ENCODE measurements at regions of chr14 and their contacts with region 1.

Region 1: GRCh38 chr14:68816262-68816942 is 23.5 kb upstream of the ZFP36L1 start:
- DNase-seq: peak; percentile 95
- H3K4me3 ChIP-seq: peak overlapping the region; percentile 61
- H3K27ac ChIP-seq: peak overlapping the region; percentile 92
- H3K4me1 ChIP-seq: peaks cover 82% of the 10 kb centered on the region
- CTCF ChIP-seq: peak; percentile 90

Region 2: DNA sequence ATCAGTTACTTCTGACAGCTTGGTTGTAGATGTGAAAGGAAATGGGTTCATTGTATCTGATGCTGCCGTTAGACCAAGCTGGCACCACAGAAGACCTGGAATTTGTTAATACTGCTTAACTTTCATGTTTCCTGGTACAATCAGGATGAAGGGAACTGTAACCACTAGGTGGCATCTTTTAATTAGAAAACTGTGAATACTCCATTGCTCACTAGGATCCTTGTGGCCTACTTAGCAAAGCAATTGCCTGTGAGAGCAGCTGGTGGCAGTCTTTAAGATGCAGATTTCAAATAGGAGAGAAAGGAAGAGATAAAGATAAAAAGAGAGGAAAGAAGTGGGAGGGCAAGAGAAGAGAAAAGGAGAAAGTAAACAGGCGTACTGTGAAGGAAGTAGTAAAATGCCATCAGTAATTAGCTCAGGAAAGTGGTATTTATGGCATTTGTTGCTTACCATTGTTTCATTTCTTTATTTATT is 882.4 kb before region 1 on chr14:
- CTCF ChIA-PET with region 1: no interaction called
- POLR2A ChIA-PET with region 1: no interaction called
- intact Hi-C with region 1: loop called (anchors 1 kb)
- DNase-seq: peak; percentile 73
- H3K4me3 ChIP-seq: no peak overlapping the region
- H3K27ac ChIP-seq: no peak overlapping the region
- H3K4me1 ChIP-seq: no peaks in the 10 kb centered on the region
- CTCF ChIP-seq: peak; percentile 90

Region 3: DNA sequence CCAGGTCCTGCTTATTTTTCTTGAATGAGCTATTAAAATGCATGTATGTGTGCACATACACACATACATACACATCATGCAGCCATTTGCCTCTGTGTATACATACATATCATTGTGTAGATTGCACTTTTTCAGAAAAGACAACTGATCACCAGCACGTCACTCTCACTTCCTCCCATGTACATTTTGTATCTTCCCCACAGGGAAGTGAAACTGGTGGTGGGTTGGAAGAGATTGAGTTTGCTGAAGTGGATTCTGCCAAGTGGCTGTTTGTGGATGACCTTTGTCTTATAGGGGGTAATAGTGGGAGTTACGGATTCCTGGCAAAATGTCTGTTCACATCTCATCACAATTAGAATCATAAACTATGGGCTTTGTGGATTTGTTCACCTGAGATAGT is 548.2 kb before region 1 on chr14:
- CTCF ChIA-PET with region 1: no interaction called
- POLR2A ChIA-PET with region 1: interaction called, 3 read pairs
- intact Hi-C with region 1: loop called (anchors 5 kb)
- DNase-seq: peak; percentile 93
- H3K4me3 ChIP-seq: peak overlapping the region; percentile 42
- H3K27ac ChIP-seq: peak overlapping the region; percentile 93
- H3K4me1 ChIP-seq: peaks cover 91% of the 10 kb centered on the region
- CTCF ChIP-seq: no peak

Region 4: GRCh38 chr14:68369281-68370056 is 446.9 kb before region 1 on chr14:
- CTCF ChIA-PET with region 1: no interaction called
- POLR2A ChIA-PET with region 1: interaction called, 5 read pairs
- intact Hi-C with region 1: loop called (anchors 2 kb)
- DNase-seq: no peak
- H3K4me3 ChIP-seq: peak overlapping the region; percentile 13
- H3K27ac ChIP-seq: peak overlapping the region; percentile 34
- H3K4me1 ChIP-seq: peaks cover 98% of the 10 kb centered on the region
- CTCF ChIP-seq: no peak

Region 5: DNA sequence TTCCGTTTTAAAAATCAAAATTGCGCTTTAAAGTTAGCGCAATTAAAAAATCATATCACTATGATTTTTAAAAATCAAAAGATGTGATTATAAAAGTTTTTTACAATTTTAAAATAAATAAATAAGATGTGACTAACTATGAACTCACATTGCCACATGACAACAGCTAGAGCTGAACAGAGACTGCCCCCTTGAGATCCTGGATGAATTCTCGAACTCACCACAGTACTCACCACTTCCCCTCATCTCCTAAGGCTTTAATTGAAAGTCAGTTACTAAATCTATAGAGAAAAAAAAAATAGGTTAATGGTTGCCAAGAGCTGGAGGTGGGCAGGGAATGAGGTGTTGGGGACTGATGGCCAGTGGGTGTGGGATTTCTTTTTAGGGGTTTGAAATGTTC is 407.7 kb before region 1 on chr14:
- CTCF ChIA-PET with region 1: no interaction called
- POLR2A ChIA-PET with region 1: no interaction called
- intact Hi-C with region 1: no loop called
- DNase-seq: peak; percentile 53
- H3K4me3 ChIP-seq: no peak overlapping the region
- H3K27ac ChIP-seq: no peak overlapping the region
- H3K4me1 ChIP-seq: peaks cover 34% of the 10 kb centered on the region
- CTCF ChIP-seq: peak; percentile 76

Region 6: DNA sequence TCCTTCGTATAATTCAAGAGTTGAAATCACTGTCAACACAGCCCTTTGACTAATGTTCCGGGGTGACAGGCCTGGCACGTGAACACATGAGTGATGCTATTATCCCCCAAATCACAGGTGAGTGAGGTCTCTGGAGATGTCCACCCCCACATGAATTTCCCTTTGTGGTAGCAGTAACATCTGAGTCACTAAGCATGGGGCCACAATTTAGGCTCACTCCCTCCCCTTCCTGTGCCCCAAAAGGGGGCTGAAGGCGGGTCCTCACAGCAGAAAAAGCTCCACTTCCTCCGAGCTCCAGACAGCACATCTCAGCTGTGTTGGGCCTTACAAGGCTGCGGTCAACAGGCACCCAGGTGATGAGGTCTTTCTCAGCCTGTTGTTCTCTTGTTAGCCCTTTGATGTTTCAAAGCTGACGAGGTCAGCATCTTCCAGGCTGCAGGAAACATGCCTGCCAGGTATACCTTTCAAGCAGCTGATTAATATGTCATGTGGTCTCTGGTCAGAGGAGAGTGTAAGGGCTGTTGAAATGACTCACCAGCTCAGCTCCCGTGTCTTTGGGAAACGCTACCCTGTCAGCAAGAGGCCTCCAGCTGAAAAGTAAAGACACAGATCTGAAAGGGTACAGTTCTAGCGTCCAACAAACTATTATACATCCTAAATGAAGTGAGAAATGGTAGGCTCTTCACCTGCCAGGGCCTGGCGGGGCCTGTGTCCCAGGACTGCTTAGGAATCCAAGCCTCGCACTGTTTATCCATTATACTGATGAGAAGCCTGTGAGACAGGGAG is 130.8 kb before region 1 on chr14:
- CTCF ChIA-PET with region 1: no interaction called
- POLR2A ChIA-PET with region 1: interaction called, 12 read pairs
- intact Hi-C with region 1: loop called (anchors 1 kb)
- DNase-seq: peak; percentile 98
- H3K4me3 ChIP-seq: peak overlapping the region; percentile 57
- H3K27ac ChIP-seq: peak overlapping the region; percentile 97
- H3K4me1 ChIP-seq: peaks cover 98% of the 10 kb centered on the region
- CTCF ChIP-seq: no peak

Region 7: GRCh38 chr14:68762953-68763764 is 53.2 kb before region 1 on chr14:
- CTCF ChIA-PET with region 1: no interaction called
- POLR2A ChIA-PET with region 1: no interaction called
- intact Hi-C with region 1: no loop called
- DNase-seq: no peak
- H3K4me3 ChIP-seq: no peak overlapping the region
- H3K27ac ChIP-seq: no peak overlapping the region
- H3K4me1 ChIP-seq: no peaks in the 10 kb centered on the region
- CTCF ChIP-seq: no peak

Region 8: GRCh38 chr14:68795597-68796417 is 20.6 kb before region 1 on chr14:
- CTCF ChIA-PET with region 1: interaction called, 24 read pairs
- POLR2A ChIA-PET with region 1: interaction called, 126 read pairs
- intact Hi-C with region 1: loop called (anchors 1 kb)
- DNase-seq: peak; percentile 90
- H3K4me3 ChIP-seq: peak overlapping the region; percentile 87
- H3K27ac ChIP-seq: peak overlapping the region; percentile 92
- H3K4me1 ChIP-seq: peaks cover 39% of the 10 kb centered on the region
- CTCF ChIP-seq: peak; percentile 71

Region 9: DNA sequence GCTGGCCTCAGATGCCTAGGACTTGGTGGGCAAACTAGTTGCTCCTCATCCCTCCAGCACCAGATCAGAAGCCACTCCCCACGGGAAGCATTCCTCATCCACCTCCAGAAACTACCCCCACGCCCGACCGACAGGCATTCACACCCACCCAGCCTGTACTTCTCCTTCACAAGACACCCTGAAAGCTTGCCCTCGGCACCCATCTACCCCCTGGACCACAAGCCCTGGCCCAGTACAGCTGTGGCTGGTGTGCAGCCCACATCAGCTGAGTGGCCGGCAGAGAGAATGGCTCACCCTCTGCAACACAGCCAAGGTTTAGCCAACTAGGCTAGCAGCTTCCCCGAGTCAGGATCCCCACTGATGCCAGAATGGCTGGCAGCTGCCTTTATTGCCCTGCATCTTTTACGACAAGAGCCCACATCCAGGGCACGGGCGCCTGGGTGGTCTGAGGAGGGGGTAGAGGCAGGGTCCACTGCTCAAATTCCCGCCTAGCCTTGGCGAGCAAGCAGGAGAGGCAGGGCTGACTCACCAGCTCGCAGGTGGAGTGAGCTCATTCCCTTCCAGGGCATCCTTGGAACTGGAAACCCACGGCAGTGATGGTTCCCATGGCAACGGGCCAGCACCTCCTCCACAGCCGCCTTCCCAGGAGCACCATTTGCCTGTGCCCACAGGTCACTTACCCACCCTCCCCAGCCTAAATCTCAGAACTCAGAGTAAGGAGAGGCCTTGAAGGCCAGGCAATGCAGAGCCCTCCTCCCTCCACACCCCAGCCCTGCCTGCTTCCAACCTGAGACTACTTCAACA is 145.6 kb after region 1 on chr14:
- CTCF ChIA-PET with region 1: no interaction called
- POLR2A ChIA-PET with region 1: no interaction called
- intact Hi-C with region 1: no loop called
- DNase-seq: no peak
- H3K4me3 ChIP-seq: no peak overlapping the region
- H3K27ac ChIP-seq: no peak overlapping the region
- H3K4me1 ChIP-seq: no peaks in the 10 kb centered on the region
- CTCF ChIP-seq: no peak

Region 10: GRCh38 chr14:69090187-69090789 is 273.9 kb after region 1 on chr14:
- CTCF ChIA-PET with region 1: no interaction called
- POLR2A ChIA-PET with region 1: no interaction called
- intact Hi-C with region 1: no loop called
- DNase-seq: peak; percentile 33
- H3K4me3 ChIP-seq: no peak overlapping the region
- H3K27ac ChIP-seq: no peak overlapping the region
- H3K4me1 ChIP-seq: no peaks in the 10 kb centered on the region
- CTCF ChIP-seq: peak; percentile 82